ENCODE measurements at regions of chr4 and their contacts with region 1.

Region 1: GRCh38 chr4:155946486-155946885 is 7.2 kb downstream of the CTSO start:
- DNase-seq: no peak
- H3K4me3 ChIP-seq: no peak overlapping the region
- H3K27ac ChIP-seq: no peak overlapping the region
- H3K4me1 ChIP-seq: no peaks in the 10 kb centered on the region
- H3K27me3 ChIP-seq: no peaks in the 10 kb centered on the region

Region 2: DNA sequence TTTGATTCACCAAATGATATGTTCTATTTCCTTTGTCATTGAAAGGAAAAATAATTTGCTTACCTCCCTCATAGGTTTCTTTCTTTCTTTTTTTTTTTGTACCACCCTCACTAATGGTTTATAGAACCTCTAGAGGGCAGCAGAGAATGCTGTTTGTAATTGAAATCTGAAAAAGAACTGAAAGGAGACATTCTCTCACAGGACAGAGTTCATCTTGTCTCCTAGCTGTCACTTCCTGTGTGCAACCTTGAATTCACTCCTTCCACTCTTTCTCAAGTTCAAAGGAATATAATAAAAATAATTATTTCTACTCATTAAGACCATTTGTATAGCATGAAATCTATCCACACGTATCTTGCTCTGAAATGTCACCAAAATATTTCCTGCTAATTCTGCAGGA is 136.7 kb before region 1 on chr4:
- in situ Hi-C with region 1: loop called (anchors 5 kb)
- DNase-seq: peak; percentile 87
- H3K4me3 ChIP-seq: no peak overlapping the region
- H3K27ac ChIP-seq: no peak overlapping the region
- H3K4me1 ChIP-seq: peaks cover 11% of the 10 kb centered on the region; the same call in 1 of the 2 replicates
- H3K27me3 ChIP-seq: no peaks in the 10 kb centered on the region

Region 3: GRCh38 chr4:156723951-156724668 is 777.6 kb after region 1 on chr4:
- in situ Hi-C with region 1: no loop called
- DNase-seq: no peak
- H3K4me3 ChIP-seq: no peak overlapping the region
- H3K27ac ChIP-seq: no peak overlapping the region
- H3K4me1 ChIP-seq: no peaks in the 10 kb centered on the region
- H3K27me3 ChIP-seq: no peaks in the 10 kb centered on the region

Measured in GM23248 (cell line).